ENCODE measurements at regions of chr22 and their contacts with region 1.

Region 1: DNA sequence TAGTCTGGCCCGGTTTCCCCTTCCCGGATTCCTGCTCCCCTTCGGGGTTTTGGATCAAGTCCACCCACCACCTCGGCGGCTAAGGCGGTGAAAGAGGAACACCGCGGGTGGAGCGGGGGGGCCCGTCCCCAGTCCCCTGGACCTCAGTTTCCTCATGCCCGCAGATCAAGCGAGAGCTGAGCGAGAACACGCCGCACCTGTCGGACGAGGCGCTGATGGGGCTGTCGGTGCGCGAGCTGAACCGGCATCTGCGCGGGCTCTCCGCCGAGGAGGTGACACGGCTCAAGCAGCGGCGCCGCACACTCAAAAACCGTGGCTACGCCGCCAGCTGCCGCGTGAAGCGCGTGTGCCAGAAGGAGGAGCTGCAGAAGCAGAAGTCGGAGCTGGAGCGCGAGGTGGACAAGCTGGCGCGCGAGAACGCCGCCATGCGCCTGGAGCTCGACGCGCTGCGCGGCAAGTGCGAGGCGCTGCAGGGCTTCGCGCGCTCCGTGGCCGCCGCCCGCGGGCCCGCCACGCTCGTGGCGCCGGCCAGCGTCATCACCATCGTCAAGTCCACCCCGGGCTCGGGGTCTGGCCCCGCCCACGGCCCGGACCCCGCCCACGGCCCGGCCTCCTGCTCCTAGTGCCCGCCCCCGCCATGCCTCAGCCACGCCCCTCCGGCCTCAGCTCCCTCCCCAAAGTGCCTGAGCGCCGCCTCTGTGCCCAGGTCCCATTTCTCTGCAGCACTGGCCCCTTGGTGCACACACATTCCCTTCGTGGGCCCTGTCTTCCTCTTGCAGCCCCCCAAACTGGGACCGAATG is 12.7 kb downstream of the MAFF start:
- DNase-seq: peak; percentile 83
- H3K4me3 ChIP-seq: peak overlapping the region in 3 of 4 donors; percentile 21 to 38 (median 35)
- H3K27ac ChIP-seq: peak overlapping the region; percentile 27 to 55 (median 43)
- H3K4me1 ChIP-seq: peaks cover 0 to 39% (median 35%) of the 10 kb centered on the region in 4 donors
- H3K27me3 ChIP-seq: no peaks in the 10 kb centered on the region
- CTCF ChIP-seq: peak in 2 of 4 experiments; percentile 24 to 25
- EP300 ChIP-seq: no peak
- POLR2A ChIP-seq: no peak

Region 2: DNA sequence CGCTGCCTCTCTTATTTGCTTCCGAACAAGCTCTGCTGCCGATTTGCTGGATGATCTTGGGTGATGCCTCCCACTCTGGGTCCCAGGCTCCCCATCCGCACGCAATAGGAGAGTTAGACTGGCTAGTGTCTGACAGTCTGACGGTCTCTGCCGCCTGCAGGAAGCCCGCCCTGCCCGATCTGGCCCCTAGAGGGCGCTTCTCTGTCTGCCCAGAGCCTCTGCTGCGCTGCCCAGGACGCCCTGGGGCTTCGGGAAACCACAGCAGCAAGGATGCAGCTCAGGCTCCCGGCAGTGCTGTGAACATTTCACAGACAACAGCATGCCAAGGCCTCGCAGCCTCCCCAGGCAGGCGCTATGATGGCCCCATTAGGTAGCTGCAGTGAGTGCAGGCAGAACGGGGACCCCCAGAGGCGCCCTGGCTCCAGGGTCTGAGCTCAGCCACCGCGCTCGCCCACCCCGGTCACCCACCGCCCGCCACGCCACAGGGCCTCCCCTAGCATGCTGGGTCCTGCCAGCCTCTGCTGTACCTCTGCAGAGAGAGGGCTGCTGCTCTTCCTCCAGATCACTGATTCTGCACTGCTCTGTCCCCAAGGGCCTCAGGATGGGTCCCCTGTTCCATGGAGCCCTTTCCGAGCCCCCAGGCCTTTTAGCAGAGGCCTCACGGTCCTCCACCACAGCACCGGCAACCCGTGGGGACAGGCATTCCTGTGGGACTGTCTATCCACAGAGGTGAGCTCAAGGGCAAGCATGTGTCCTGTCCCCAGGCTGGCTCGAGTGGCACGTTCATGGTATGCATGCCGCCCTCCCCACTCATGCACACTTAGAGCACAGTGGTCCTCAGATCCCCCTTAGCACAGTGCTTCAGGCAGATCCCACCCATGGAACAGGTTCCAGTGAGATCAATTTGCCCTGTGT is 99.7 kb before region 1 on chr22:
- intact Hi-C with region 1: loop called (anchors 10 kb)
- DNase-seq: peak; percentile 91
- H3K4me3 ChIP-seq: no peak overlapping the region
- H3K27ac ChIP-seq: no peak overlapping the region
- H3K4me1 ChIP-seq: peaks cover 0 to 9% (median 4%) of the 10 kb centered on the region in 4 donors
- H3K27me3 ChIP-seq: no peaks in the 10 kb centered on the region
- CTCF ChIP-seq: peak; percentile 53 to 97 (median 90)
- EP300 ChIP-seq: no peak
- POLR2A ChIP-seq: no peak

Region 3: GRCh38 chr22:38257181-38257580 is 42.7 kb after region 1 on chr22:
- intact Hi-C with region 1: loop called (anchors 5 kb)
- DNase-seq: peak; percentile 78
- H3K4me3 ChIP-seq: peak overlapping the region in 3 of 4 donors; percentile 23 to 36 (median 35)
- H3K27ac ChIP-seq: peak overlapping the region; percentile 83 to 93 (median 90)
- H3K4me1 ChIP-seq: peaks cover 0 to 63% (median 53%) of the 10 kb centered on the region in 4 donors
- H3K27me3 ChIP-seq: no peaks in the 10 kb centered on the region
- CTCF ChIP-seq: no peak
- EP300 ChIP-seq: peak in 2 of 4 donors; percentile 19 to 66
- POLR2A ChIP-seq: no peak

Region 4: GRCh38 chr22:38338772-38339379 is 124.4 kb after region 1 on chr22:
- intact Hi-C with region 1: no loop called
- DNase-seq: peak; percentile 25
- H3K4me3 ChIP-seq: no peak overlapping the region
- H3K27ac ChIP-seq: no peak overlapping the region
- H3K4me1 ChIP-seq: peaks cover 0 to 11% (median 7%) of the 10 kb centered on the region in 4 donors
- H3K27me3 ChIP-seq: peaks cover 0 to 10% (median 0%) of the 10 kb centered on the region in 3 donors
- CTCF ChIP-seq: no peak
- EP300 ChIP-seq: no peak
- POLR2A ChIP-seq: no peak

Measured in sigmoid colon (tissue), 7 donors.